Natural killer cell (primary cell): ENCODE measurements at regions of chr4 and their contacts with region 1.

Region 1: DNA sequence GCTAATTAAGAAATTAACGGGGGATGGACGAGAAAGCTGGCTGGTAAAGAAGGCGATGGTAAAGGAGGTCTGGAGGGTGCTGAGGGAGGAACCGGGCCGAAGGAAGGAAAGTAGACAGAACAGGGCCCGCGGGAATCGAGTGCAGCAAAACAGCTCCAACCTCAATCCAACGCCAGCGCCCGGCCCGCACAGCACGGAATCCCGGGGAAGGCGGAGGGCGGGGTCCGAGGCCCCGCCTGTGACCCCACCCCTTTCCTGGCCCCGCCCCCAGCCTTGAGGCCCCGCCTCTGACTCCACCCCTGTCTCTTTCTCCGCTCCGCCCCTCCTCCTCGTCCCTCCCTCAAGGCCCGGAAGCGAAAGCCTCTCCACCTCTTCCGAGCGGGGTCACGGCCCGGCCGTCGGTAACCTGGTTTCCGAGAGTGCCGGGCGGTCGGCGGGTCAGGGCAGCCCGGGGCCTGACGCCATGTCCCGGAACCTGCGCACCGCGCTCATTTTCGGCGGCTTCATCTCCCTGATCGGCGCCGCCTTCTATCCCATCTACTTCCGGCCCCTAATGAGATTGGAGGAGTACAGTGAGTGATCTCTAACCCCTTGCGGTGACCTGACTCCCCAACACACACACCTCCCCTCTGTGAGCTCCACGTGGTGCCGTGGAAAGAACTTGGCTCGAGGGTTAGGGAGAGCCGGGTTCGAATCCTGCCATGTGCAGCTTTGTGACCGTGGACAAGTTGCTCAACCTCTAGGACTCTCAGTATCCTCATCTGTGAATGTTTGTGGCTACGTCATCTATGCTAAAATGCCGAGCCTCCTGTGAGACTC is at the start of gene SMIM20:
- DNase-seq: peak; percentile 86 to 95
- ATAC-seq: peak; percentile 96 to 99 (median 96)
- H3K4me3 ChIP-seq: peak within 1 kb of the TSS; percentile 91
- H3K4me3 Mint-ChIP-seq: peak within 1 kb of the TSS; percentile 97
- H3K27ac ChIP-seq: peak within 1 kb of the TSS; percentile 97
- H3K27ac Mint-ChIP-seq: peak within 1 kb of the TSS; percentile 95 to 99
- H3K4me1 ChIP-seq: peaks cover 18% of the 10 kb centered on the region
- H3K4me1 Mint-ChIP-seq: peaks cover 16 to 24% of the 10 kb centered on the region in 2 donors
- H3K27me3 ChIP-seq: no peaks in the 10 kb centered on the region
- H3K27me3 Mint-ChIP-seq: peaks cover 1 to 5% of the 10 kb centered on the region in 2 donors
- CTCF ChIP-seq: no peak
- total RNA-seq, gene SMIM20: 10.3 to 11.5 (median 10.3) TPM

Region 2: DNA sequence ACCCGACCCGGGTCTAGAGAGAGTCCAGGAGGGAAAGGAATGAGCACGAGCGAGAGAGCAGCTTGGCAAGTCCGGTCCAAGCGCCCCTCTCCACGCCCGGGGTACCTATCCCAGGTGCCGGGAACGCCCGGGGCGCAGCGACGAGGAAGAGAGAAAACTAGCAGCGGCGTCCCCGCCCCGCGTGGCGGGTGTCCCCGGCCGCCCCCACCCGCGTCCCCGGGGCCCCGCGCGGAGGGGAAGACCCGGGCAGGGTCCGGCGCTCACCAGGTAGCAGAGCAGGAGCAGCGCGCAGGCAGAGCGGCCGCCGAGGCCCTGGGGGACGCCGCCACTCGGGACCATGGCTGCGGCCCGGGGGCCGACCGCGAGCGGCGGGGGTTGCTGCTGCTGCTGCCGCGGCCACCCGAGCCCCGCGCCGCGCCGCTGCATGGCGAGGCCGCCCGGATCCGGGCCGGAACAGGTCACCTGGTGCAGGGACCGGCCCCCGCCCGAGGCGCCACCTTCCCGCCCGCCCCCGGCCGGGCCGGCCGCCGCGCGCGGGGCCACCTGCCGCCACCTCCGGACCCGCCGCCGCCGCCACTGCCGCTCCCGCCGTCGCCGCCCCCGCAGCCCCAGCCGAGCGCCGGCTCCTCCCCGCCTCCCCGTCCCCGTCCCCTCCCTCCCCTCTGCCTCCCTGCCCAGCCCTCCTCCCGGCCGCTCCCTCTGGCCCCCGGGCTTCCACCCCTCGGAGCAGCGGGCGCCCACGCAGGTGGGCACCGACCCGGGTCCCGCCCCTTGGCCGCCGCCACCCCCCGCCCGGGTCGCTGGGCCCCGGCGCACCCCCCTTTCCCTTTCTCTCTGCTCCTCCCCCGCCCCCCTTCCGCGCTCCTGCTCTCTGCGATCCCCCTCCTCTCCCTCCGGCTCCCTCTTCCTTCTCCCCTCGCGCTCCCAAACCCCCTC is 51.4 kb before region 1 on chr4 and contains the start of gene SEL1L3:
- intact Hi-C with region 1: loop called (anchors 2 kb)
- DNase-seq: peak; percentile 41 to 65
- ATAC-seq: peak; percentile 49 to 71 (median 66)
- H3K4me3 ChIP-seq: peak within 1 kb of the TSS; percentile 74
- H3K4me3 Mint-ChIP-seq: peak within 1 kb of the TSS; percentile 97
- H3K27ac ChIP-seq: peak within 1 kb of the TSS; percentile 85
- H3K27ac Mint-ChIP-seq: peak within 1 kb of the TSS; percentile 77 to 94
- H3K4me1 ChIP-seq: peaks cover 33% of the 10 kb centered on the region
- H3K4me1 Mint-ChIP-seq: peaks cover 38 to 50% of the 10 kb centered on the region in 2 donors
- H3K27me3 ChIP-seq: no peaks in the 10 kb centered on the region
- H3K27me3 Mint-ChIP-seq: no peaks in the 10 kb centered on the region
- CTCF ChIP-seq: no peak
- total RNA-seq, gene SEL1L3: 45.4 to 61.0 (median 45.7) TPM